GM18951 (cell line): ENCODE measurements at regions of chr4 and their contacts with region 1.

Region 1: DNA sequence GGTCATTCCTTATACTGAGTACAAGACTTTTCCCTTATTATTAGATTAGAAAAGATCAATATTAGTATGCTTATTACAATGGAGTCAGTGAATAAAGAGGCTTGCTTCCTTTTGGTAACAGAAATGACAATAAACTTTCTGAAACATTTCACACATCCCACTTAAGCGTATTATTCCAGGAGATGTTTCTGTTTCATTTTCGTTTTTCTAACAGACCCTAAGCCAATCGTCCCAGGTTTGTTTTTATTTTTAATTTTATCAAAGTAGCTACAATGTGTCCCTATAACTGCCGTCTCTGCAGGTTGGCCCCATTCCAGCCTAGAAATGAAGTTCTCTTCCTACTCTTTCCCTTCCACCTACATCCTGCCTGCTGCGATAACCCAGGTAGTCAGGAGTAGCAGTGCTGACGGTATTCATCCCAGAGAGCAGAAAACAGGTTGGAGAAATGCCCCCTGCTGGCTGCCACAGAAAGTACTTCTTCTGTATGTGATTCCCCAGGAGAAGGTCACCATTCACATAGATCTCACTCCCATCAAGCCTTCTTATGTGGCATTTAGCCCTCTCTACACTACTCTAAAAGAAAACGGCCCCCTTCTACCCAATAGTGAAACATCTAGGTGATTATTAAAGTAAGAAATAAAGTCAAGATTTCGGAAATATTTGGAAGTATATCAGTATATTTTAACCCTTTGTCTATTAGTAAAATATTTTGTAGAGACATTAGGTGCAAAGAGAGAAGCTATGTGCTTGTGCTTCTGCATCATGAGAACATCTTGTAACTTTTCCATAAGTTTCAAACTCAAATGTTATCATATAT is 40.4 kb downstream of the ENPEP start:
- POLR2A ChIP-seq: no peak

Region 2: DNA sequence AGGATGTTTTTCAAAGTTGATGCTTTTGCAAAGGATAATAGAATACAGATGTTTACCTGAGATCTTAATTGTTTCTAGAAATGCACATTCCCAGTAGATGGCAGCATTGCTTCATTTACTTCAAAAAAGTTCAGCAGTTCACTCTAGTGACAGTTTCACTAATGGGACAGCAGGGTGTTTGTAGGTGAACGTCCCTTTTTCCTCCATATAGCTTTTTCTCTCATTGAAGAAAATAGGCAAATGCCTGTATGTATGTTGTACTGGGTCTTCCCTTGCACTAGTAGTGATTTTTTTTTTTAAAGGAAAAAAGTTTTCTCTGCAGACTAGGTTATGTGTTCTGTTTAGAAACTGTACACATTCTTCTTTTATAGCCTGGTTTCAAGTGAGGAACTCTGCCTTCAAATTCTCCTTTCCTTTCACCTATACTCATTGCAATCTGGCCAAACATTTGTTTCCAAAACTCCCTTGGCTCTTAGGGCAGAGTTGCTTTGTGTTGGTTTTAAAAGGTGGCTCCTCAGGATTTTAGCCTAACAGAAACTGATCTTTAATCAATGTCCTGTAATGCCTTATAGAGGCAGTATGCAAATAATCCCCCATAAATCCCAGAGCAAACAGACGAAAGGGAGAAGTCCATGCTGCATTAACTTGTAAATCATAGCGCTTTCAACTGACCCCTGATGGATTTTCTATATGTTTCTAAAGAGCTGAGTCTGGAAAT is 517.3 kb before region 1 on chr4:
- in situ Hi-C with region 1: loop called (anchors 5 kb)
- POLR2A ChIP-seq: no peak

Region 3: GRCh38 chr4:110211007-110211769 is 305.1 kb before region 1 on chr4:
- in situ Hi-C with region 1: loop called (anchors 25 kb)
- POLR2A ChIP-seq: no peak

Region 4: DNA sequence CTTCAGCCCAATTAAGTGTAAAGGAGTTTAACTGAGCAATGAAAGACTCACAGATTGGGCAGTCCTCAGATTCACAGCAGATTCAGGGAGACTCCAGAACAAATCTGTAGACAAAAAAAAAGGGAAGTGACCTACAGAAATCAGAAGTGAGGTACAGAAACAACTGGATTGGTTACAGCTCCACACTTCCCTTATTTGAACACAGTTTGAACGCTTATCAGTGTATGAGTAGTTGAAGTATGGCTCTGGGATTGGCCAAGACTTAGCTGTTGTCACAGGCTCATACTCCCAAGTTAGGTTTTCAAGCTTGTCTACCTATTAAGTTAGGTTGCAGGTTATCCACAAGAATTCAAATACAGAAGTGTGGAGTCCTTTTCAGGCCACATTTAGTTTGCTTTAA is 205.5 kb before region 1 on chr4:
- in situ Hi-C with region 1: loop called (anchors 10 kb)
- POLR2A ChIP-seq: no peak

Region 5: DNA sequence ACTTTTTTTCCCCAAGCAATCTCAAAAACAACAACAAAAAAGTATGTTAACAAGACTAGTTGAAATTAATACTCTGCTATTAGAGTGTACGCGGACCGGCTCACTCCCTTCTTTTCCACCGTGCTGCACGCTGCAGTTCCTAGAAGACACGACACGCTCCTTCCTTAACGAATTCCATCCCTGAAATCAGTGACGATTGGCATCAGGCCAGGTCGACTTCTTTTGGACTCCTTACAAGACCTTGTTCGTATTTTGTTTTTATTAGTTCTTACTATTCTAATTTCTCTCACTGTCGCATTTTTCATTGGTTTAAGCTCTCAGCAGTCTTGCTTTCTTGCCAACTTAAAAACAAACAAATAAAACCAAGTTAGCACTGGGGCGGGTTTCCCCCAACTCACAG is 282.4 kb after region 1 on chr4:
- in situ Hi-C with region 1: no loop called
- POLR2A ChIP-seq: no peak